GM10248 (cell line): ENCODE measurements at regions of chr22 and their contacts with region 1.

Region 1: GRCh38 chr22:30444632-30445437 is 19.3 kb downstream of the MTFP1 start:
- DNase-seq: peak; percentile 86
- CTCF ChIP-seq: peak; percentile 71

Region 2: DNA sequence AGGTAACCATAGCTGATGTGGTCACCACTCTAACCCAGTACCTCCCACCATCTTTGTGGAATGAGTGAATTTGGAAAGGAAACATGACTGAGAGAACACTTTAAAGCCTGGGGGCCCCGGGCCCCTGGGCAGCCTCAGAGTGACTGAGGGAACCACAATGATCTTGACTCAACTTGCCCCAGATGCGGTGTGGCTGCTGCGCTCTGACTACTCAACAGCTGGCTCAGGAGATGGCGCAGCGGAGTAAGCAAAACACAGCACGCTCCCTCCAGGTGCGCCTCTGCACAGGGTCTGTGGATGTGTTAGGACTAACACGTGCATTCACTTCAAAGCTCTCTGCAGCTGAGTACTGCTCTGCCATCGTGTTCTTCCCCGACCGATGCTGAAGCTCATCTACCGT is 63.6 kb before region 1 on chr22:
- CTCF ChIA-PET with region 1: no interaction called
- POLR2A ChIA-PET with region 1: no interaction called
- DNase-seq: no peak
- CTCF ChIP-seq: no peak

Region 3: DNA sequence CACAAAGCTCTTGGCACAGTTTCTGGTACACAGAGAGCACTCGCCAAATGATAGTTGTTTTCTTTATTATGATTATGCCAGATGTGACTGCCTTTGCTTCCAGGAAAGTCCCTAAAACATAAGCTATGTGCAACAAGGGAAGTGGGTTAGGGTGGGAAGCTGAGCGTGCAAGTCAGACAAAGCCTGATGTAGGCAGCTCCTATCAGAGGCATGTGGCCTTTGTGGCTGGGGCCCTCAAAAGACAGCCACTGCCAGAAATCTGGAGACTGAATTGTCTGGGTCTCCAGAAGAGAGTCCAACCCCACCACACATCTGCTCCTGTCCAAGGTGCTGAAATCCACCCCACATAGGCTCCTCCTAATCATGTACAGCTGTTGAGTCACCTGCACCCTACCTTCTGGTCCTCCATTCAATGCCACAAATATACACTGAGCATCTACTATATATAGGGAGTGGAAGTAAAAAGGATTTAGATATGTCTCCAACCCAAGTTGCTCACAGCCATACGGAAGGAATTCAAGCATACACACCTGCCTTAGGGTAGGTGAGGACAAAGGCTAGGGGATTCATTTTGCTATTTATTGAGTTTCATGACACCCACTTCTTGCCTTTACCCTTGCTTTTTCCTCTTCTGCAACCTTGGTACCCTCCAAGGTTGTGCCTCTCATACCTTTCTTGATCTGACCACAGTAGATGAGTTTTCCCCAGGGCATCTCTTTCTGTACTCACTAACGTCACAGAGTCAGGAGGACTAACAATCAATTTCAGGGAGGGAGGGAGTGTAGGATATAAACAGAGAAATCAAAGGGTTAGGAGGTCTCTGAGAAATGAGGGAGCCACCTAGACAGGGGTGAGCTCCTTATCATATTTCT is 14.6 kb after region 1 on chr22:
- CTCF ChIA-PET with region 1: interaction called, 44 read pairs
- POLR2A ChIA-PET with region 1: no interaction called
- DNase-seq: no peak
- CTCF ChIP-seq: no peak